OCI-LY7 (cell line): ENCODE measurements at regions of chr6 and their contacts with region 1.

Region 1: DNA sequence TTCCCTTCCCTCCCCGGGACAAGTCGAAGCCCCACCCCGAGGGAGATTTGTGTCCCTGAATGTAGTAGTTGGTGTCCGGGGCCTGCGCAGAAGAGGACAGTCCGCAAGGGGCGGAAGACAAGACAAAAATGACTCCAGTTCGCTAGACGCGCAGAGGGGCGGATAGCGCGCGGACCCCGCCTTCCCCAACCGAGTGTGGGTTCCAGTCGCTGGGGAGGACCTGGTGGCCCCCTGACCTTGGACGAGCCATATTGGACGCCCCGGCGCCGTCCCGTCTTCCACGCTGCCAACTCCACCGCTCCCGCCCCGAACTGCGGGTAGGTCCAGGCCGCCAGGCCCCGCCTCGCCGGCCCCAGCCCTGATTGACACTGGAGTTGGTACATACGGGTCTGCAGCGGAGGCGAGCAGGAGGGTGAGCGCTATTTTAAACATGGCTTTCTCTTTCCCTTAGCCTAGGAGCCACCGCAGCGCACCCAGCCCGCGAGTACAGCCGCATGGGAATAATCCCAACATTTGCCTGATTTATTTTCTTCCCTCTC is 802 bp downstream of the HMGN3 start:
- DNase-seq: peak; percentile 71
- H3K4me3 ChIP-seq: peak overlapping the region; percentile 77
- H3K27ac ChIP-seq: peak overlapping the region; percentile 48
- H3K4me1 ChIP-seq: peaks cover 32% of the 10 kb centered on the region
- CTCF ChIP-seq: 0 out of 2 replicates have a peak, but pooled peaks have one; percentile 22

Region 2: DNA sequence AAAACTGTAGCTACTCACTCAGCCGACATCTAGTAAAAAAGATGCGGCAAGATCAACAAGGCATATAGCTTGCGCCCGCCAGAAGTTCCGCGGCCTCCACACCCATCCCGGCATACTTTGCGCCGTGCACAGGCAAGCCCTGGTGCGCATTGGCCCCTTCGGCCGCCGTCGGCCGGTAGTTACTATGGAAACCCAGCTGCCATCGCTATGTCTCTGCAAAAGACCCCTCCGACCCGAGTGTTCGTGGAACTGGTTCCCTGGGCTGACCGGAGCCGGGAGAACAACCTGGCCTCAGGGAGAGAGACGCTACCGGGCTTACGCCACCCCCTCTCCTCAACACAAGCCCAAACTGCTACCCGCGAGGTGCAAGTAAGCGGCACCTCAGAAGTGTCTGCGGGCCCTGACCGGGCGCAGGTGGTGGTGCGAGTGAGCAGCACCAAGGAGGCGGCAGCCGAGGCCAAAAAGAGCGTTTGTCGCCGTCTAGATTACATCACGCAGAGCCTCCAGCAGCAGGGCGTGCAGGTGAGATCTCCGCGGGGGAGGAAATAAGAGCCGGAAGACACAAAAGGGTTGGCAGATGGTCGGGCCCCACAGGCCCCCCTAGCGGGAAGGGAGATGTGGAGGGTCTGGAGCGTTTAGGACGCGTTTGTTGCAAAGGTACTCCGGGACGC is 366.2 kb before region 1 on chr6 and contains the start of gene IRAK1BP1:
- CTCF ChIA-PET with region 1: no interaction called
- POLR2A ChIA-PET with region 1: no interaction called
- intact Hi-C with region 1: loop called (anchors 2 kb)
- DNase-seq: peak; percentile 95
- H3K4me3 ChIP-seq: peak within 1 kb of the TSS; percentile 88
- H3K27ac ChIP-seq: peak within 1 kb of the TSS; percentile 93
- H3K4me1 ChIP-seq: peaks cover 13% of the 10 kb centered on the region
- CTCF ChIP-seq: peak; percentile 64
- total RNA-seq, gene IRAK1BP1: 5.9 and 7.6 TPM in 2 replicates

Region 3: GRCh38 chr6:79215233-79215824 is 18.4 kb before region 1 on chr6:
- CTCF ChIA-PET with region 1: no interaction called
- POLR2A ChIA-PET with region 1: interaction called, 13 read pairs
- intact Hi-C with region 1: no loop called
- DNase-seq: no peak
- H3K4me3 ChIP-seq: no peak overlapping the region
- H3K27ac ChIP-seq: no peak overlapping the region
- H3K4me1 ChIP-seq: no peaks in the 10 kb centered on the region
- CTCF ChIP-seq: no peak

Region 4: DNA sequence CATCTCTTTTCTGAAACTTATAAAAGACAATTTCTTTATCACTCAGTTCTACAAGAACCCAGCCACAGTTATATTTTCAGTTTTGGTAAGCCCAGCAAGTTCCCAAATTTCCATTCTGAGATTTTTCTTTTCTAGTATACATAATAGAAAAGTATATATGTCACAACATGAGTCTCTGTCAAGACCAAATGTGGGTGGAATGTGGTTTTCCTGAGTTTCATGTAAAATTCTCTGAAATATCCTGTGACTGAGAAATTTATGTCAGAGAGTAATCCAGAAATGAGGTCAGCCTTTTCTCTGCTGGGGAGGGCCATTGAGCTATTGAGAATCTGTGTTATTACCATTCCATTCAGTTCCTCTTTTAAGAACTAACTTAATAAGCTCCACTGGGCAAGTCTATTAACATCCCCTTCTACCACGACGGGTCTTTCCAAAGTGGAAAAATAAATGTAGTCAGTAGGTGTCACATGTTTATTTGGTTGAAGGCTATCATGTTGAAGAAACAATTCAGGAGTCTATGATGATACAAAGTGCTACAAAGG is 101.5 kb after region 1 on chr6:
- CTCF ChIA-PET with region 1: no interaction called
- POLR2A ChIA-PET with region 1: no interaction called
- intact Hi-C with region 1: no loop called
- DNase-seq: no peak
- H3K4me3 ChIP-seq: no peak overlapping the region
- H3K27ac ChIP-seq: no peak overlapping the region
- H3K4me1 ChIP-seq: no peaks in the 10 kb centered on the region
- CTCF ChIP-seq: no peak

Region 5: DNA sequence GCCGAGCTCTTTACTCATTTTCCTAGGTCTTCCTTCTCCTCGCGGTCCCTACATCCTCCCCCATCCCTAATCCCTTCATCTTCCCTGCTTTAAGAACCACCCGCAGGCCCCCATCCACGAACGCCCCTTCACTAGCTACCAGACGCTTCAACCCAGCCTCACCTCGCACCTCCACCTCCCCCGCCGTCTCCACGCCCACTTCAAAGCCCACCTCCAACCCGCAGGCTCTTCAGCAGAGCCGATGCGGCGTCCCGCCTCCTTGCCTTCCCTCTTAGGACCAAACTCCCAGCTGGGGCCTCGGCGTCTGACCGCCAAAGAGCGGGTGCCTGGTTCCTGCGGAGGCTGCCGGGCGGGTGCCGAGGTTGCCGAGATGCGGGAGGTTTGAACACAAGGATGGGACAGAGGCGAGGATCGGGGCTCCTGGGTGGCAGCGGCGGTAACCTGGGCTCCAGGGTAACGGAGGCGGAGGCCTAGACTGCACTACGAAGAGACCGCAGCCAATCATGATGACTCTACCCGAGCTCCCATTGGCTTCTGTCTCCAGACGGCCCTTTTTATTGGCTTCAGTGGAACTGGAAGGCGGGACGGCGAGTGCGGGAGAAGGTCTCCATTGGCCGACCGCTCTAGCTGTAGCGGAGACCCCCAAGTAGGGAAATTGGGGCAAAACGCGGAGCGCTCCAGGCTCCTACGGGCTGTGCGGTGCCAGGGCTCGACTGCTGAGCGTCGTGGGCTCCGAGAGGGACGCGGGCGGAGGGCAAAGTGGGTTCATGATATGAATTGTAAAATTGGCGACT is 303.5 kb after region 1 on chr6 and contains the start of gene LCA5:
- CTCF ChIA-PET with region 1: no interaction called
- POLR2A ChIA-PET with region 1: no interaction called
- intact Hi-C with region 1: loop called (anchors 2 kb)
- DNase-seq: peak; percentile 96
- H3K4me3 ChIP-seq: peak within 1 kb of the TSS; percentile 69
- H3K27ac ChIP-seq: no peak within 1 kb of the TSS
- H3K4me1 ChIP-seq: peaks cover 14% of the 10 kb centered on the region
- CTCF ChIP-seq: no peak
- total RNA-seq, gene LCA5: 0.77 and 1.3 TPM in 2 replicates

Region 6: DNA sequence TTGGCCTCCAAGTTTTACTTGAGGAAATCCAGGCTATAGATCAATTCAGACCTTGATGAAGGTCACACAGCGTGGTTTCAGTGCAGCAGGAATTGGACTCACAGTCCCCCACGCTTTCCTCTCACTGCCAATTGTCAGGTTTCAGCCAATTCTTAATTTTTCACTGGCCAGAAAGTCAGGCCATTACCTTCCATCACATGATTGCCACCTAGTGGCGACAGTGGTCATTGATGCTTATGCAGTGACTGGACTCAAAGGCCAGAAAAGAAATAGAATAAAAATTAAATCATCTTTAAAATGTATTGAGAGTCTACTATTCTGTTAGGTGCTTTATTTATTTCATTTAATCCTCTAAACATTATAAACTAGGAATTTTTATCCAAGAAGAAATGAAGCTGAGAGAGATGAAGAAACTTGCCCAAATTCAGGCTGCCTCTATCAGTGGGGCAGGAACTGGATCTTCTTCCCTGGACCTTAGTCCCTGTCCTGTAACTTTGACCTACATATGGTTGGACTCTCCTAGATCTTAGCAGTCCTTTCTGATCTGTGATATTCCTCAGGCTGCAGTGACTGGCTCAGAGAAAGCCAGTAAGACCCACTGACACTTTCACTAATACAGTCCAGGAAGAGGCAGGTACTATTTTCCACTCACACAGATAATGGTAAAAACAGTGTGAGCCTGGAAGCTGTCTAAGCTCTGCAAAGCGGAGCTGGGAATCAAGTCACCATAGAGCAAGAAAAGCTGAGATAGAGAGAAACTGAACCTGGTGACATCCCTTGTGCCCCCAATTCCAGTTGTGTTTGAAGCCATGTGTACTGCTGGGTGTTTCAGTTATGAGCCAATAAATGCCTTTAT is 580.4 kb after region 1 on chr6:
- CTCF ChIA-PET with region 1: no interaction called
- POLR2A ChIA-PET with region 1: no interaction called
- intact Hi-C with region 1: no loop called
- DNase-seq: peak; percentile 60
- H3K4me3 ChIP-seq: no peak overlapping the region
- H3K27ac ChIP-seq: no peak overlapping the region
- H3K4me1 ChIP-seq: no peaks in the 10 kb centered on the region
- CTCF ChIP-seq: peak; percentile 90

Region 7: GRCh38 chr6:80106418-80107235 is 872.9 kb after region 1 on chr6 and contains the start of gene BCKDHB:
- CTCF ChIA-PET with region 1: no interaction called
- POLR2A ChIA-PET with region 1: no interaction called
- intact Hi-C with region 1: loop called (anchors 5 kb)
- DNase-seq: peak; percentile 99
- H3K4me3 ChIP-seq: peak within 1 kb of the TSS; percentile 94
- H3K27ac ChIP-seq: peak within 1 kb of the TSS; percentile 46
- H3K4me1 ChIP-seq: peaks cover 14% of the 10 kb centered on the region
- CTCF ChIP-seq: no peak
- total RNA-seq, gene BCKDHB: 25.0 and 30.3 TPM in 2 replicates